IMR-90 (cell line): ENCODE measurements at regions of chr1 and their contacts with region 1.

Region 1: DNA sequence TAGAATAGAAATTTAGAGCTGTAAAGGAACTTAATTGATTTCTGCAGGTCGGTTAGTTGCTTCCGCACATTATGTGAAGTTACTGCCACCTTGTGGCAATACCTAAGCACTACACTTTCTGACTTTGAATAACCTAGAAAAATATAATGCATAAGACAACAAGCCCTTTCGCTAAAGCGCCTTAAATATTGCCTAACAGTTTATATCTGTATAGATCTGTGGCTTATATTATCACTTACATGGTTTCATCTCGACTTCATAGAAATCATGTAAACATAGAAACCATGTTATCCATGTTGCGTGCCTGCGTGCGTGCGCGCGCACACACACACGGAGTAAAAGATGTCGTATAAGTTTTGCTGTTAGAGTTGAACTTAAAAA is 10.9 kb upstream of the IFI16 start:
- DNase-seq: peak; percentile 61
- ATAC-seq: peak; percentile 59
- H3K4me3 ChIP-seq: peak overlapping the region; percentile 61
- H3K27ac ChIP-seq: peak overlapping the region; percentile 36; the same call in 1 of the 2 replicates
- H3K4me1 ChIP-seq: no peaks in the 10 kb centered on the region
- H3K27me3 ChIP-seq: no peaks in the 10 kb centered on the region
- CTCF ChIP-seq: peak; percentile 90
- POLR2A ChIP-seq: no peak
- RAD21 ChIP-seq: peak; percentile 78

Region 2: GRCh38 chr1:158203693-158204457 is 794.9 kb before region 1 on chr1:
- CTCF ChIA-PET with region 1: interaction called, 7 read pairs
- POLR2A ChIA-PET with region 1: no interaction called
- dilution Hi-C with region 1: no loop called
- in situ Hi-C with region 1: loop called (anchors 10 kb)
- intact Hi-C with region 1: loop called (anchors 1 kb)
- DNase-seq: peak; percentile 76
- ATAC-seq: peak; percentile 93
- H3K4me3 ChIP-seq: no peak overlapping the region
- H3K27ac ChIP-seq: no peak overlapping the region
- H3K4me1 ChIP-seq: no peaks in the 10 kb centered on the region
- H3K27me3 ChIP-seq: no peaks in the 10 kb centered on the region
- CTCF ChIP-seq: peak; percentile 66
- POLR2A ChIP-seq: no peak
- RAD21 ChIP-seq: peak; percentile 56

Region 3: DNA sequence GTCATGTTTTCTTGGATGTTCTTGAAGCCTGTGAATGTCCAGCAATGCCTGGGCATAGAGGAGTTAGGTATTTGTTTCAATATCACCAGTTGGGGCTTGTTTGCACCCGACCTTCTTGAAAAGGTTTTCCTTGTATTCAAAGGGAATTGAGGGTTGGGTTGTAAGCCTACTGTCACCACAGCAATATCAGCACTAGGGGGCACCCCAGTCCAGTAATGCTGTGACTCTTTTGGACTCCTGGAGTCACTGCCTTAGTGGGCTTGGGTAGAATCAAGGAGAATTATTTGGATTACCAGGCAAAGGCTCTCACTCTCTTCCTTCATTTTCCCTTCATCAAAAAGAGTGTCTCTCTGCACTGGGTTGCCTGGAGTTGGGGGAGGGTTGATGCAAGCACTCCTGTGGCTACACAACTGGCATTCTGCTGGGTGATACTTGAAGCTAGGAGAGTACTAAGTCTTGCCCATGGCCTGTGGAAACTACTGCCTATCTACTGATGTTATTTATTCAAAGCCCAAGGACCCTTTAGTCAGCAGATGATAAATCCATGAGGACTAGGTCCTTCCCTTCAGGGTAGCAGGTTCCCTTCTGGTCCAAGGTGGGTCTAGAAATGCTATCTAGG is 492.3 kb before region 1 on chr1:
- CTCF ChIA-PET with region 1: no interaction called
- POLR2A ChIA-PET with region 1: no interaction called
- dilution Hi-C with region 1: no loop called
- in situ Hi-C with region 1: no loop called
- intact Hi-C with region 1: loop called (anchors 1 kb)
- DNase-seq: peak; percentile 8
- ATAC-seq: no peak
- H3K4me3 ChIP-seq: no peak overlapping the region
- H3K27ac ChIP-seq: no peak overlapping the region
- H3K4me1 ChIP-seq: no peaks in the 10 kb centered on the region
- H3K27me3 ChIP-seq: no peaks in the 10 kb centered on the region
- CTCF ChIP-seq: peak; percentile 49
- POLR2A ChIP-seq: no peak
- RAD21 ChIP-seq: peak; percentile 54

Region 4: DNA sequence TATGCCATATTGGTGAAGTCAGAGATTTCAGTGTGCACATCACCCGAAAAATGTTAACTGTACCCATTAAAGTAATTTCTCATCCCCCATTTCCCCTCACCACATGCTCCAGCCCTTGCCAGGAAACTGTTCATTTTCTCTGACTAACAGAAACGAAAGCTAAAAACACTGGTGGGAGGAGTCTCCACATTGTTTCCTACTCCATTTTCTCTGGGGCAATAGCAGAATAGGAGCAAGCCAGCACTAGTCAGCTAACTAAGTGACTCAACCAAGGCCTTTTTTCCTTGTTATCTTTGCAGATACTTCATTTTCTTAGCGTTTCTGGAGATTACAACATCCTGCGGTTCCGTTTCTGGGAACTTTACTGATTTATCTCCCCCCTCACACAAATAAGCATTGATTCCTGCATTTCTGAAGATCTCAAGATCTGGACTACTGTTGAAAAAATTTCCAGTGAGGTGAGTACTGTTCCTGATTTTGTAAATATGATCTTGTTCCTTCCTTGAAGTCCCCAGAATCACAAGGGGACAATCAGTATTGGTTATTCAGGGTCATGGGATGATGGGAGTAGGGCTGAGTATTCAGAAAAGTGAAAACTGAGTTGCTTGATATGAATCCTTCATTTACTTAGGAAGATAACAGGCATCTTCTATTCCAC is 11.1 kb after region 1 on chr1 and contains the start of gene IFI16:
- CTCF ChIA-PET with region 1: interaction called, 3 read pairs
- POLR2A ChIA-PET with region 1: interaction called, 7 read pairs
- dilution Hi-C with region 1: no loop called
- in situ Hi-C with region 1: no loop called
- intact Hi-C with region 1: loop called (anchors 1 kb)
- DNase-seq: peak; percentile 96
- ATAC-seq: peak; percentile 93
- H3K4me3 ChIP-seq: peak within 1 kb of the TSS; percentile 90
- H3K27ac ChIP-seq: peak within 1 kb of the TSS; percentile 96
- H3K4me1 ChIP-seq: peaks cover 14% of the 10 kb centered on the region
- H3K27me3 ChIP-seq: no peaks in the 10 kb centered on the region
- CTCF ChIP-seq: no peak
- POLR2A ChIP-seq: peak; percentile 57; the same call in 1 of the 2 replicates
- RAD21 ChIP-seq: no peak
- total RNA-seq, gene IFI16: 45.0 and 60.3 TPM in 2 replicates

Region 5: DNA sequence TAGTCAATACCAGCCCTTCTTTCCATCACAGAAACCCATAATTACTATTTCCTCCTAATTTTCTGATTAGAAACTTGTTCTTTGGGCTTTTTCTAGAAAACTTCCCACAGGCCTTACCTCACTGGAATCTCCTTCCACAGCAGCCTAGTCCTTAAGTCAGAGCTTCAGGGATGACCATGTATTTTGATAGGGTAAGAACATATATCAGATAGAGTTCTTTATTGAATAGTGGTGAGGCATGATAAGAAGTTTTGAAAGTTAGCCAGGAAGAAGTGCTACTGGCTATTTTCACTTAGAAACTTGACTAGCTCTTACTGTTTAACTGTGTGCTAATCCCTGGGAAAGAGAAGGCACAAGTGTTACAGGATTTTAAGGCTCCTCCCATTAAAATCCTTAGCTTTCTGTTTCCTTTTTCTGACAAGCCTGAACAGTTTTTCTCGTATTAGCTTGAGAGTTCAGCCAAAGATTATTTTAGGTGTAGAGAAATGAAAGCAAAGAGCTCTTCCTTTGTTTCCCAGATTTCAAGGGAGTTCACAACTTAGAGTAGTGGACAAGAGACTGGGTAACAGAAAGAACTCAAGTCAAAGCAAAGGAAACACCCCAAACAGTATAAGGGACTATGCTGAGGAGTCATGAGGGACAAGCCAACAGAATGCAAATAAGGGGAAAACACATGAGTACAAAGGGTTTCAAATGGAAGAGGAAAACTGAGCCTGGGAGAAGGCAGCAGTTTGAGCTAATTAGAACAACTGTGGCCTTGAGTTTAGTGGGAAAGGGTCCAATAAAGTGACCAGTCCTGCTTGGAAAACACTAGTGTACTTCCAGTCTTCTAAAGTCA is 115.0 kb after region 1 on chr1:
- CTCF ChIA-PET with region 1: no interaction called
- POLR2A ChIA-PET with region 1: no interaction called
- dilution Hi-C with region 1: no loop called
- in situ Hi-C with region 1: no loop called
- intact Hi-C with region 1: no loop called
- DNase-seq: no peak
- ATAC-seq: no peak
- H3K4me3 ChIP-seq: no peak overlapping the region
- H3K27ac ChIP-seq: no peak overlapping the region
- H3K4me1 ChIP-seq: no peaks in the 10 kb centered on the region
- H3K27me3 ChIP-seq: no peaks in the 10 kb centered on the region
- CTCF ChIP-seq: no peak
- POLR2A ChIP-seq: no peak
- RAD21 ChIP-seq: no peak